ENCODE measurements at regions of chr4 and their contacts with region 1.

Region 1: GRCh38 chr4:102826890-102827673 is at the start of gene UBE2D3:
- DNase-seq: peak; percentile 95
- ATAC-seq: peak; percentile 80
- total RNA-seq, gene UBE2D3: 262 TPM

Region 2: GRCh38 chr4:102760645-102761295 is 66.3 kb before region 1 on chr4 and contains the start of gene MANBA:
- intact Hi-C with region 1: loop called (anchors 5 kb)
- DNase-seq: peak; percentile 92
- ATAC-seq: peak; percentile 99
- total RNA-seq, gene MANBA: 22.4 TPM

Region 3: DNA sequence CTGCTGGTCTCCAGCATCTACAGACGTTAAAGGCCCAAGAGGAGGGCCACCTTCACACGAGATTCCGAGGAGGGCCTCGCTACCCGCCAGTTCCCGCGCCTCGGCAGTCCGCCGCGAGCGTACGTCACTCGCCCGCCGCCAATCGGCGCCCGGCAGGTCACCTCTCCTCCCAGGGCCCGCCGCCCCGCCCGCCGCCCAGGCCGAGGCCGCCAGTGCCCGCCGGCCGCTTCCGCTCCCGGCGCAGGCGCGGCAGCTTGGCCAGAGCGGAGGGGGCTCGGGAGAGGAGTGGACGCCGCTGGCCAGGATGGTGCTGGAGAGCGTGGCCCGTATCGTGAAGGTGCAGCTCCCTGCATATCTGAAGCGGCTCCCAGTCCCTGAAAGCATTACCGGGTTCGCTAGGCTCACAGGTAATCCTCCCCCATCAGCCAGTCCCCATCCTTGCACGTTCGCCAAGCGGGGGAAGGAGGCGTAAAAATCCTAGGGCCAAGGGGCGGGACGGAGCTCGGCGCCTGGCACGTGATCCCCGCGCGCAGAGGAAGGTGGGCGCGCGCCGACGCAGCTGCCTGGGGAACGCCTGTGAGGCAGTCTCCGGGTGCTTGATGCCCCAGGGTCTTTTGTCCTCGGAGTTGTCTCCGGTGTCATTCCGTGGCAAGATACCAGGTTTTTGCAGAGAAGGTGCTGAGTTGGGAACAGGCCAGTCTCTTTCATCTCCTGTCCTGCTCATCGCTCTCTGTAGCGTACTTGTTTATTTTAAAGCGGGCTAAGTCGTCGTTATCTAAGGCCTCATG is 41.9 kb after region 1 on chr4 and contains the start of gene CISD2:
- intact Hi-C with region 1: loop called (anchors 5 kb)
- DNase-seq: peak; percentile 95
- ATAC-seq: peak; percentile 99
- total RNA-seq, gene CISD2: 14.1 TPM

Measured in Right ventricle myocardium superior (tissue), 1 donor.